Cardiac septum (tissue), 1 donor: ENCODE measurements at regions of chr10 and their contacts with region 1.

Region 1: GRCh38 chr10:109894516-109894915 is 28.8 kb downstream of the XPNPEP1 start:
- DNase-seq: no peak

Region 2: GRCh38 chr10:109922976-109923921 is 28.7 kb after region 1 on chr10 and contains the start of gene XPNPEP1:
- intact Hi-C with region 1: loop called (anchors 5 kb)
- DNase-seq: peak; percentile 96
- total RNA-seq, gene XPNPEP1: 43.5 TPM

Region 3: GRCh38 chr10:110007701-110008517 is 113.4 kb after region 1 on chr10 and contains the start of gene ADD3:
- intact Hi-C with region 1: loop called (anchors 2 kb)
- DNase-seq: peak; percentile 97
- total RNA-seq, gene ADD3: 77.2 TPM

Region 4: DNA sequence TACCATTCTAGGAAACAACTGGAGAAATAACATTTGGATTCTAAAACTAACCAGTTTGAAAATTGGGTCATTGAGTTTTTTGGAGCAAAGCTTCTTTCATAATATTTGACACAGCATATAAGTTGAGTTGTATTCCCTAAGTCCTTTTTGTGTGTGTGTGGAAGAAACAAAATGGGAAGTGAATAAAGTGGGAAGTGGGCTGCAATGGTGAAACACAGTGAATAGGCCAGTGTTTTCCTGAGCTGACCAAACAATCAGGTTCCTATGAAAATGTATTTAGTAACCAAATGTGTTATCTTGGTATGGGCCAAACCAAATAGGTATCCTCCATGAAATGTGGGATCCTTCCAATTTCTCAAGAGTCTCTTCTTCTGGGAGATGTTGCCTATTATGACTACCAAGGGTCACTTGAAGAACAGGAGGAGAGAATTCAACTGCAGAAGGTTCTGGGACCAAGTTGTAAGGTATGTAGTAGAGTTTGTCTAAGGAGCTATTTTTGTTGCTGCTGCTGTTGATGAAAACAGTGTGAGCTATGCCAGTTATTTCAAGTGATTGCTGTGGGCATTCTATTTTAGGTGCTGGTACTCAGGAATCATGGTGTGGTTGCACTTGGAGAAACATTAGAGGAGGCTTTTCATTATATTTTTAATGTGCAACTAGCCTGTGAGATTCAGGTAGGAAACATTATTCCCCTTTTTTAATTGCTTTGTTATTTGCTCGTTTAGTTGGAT is 224.5 kb after region 1 on chr10:
- intact Hi-C with region 1: loop called (anchors 5 kb)
- DNase-seq: no peak

Region 5: GRCh38 chr10:110225756-110226542 is 331.4 kb after region 1 on chr10:
- intact Hi-C with region 1: loop called (anchors 5 kb)
- DNase-seq: peak; percentile 96